ENCODE measurements at regions of chr5 and their contacts with region 1.

Region 1: DNA sequence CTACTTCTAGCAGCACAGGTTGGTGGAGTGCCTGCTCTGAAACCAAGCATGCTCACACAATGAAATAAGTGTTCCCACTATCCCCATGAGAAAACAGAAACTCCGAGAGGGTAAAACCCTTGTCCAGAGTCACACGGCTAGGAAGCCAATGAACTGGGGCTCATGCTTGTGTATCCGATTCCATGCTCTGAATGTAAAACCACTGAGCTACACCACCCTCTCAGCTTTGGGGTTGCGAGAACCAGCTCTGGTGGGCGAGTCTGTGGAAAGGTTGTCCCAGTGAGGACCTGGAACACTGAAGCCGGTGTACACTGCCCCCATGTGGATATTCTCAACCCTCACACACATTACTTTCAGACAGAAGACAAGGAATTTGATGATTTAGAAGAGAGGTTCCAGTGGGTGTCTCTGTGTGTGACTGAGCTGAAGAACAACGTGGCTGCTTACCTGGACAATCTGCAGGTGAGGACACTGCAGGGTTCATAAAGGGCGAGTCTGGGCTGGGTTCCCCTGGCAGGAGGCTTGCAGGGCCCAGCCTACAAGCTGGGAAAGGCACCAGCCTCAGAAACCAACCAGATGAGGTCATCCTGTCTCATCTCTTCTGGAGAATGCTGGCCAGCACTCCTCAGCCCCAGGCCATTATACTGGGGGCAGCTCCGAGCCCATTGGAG is 37.4 kb downstream of the ARHGEF37 start:
- DNase-seq: peak; percentile 75 to 77
- H3K4me3 ChIP-seq: no peak overlapping the region
- H3K27ac ChIP-seq: peak overlapping the region; percentile 54
- H3K4me1 ChIP-seq: peaks cover 33% of the 10 kb centered on the region
- H3K27me3 ChIP-seq: no peaks in the 10 kb centered on the region
- CTCF ChIP-seq: peak; percentile 87

Region 2: DNA sequence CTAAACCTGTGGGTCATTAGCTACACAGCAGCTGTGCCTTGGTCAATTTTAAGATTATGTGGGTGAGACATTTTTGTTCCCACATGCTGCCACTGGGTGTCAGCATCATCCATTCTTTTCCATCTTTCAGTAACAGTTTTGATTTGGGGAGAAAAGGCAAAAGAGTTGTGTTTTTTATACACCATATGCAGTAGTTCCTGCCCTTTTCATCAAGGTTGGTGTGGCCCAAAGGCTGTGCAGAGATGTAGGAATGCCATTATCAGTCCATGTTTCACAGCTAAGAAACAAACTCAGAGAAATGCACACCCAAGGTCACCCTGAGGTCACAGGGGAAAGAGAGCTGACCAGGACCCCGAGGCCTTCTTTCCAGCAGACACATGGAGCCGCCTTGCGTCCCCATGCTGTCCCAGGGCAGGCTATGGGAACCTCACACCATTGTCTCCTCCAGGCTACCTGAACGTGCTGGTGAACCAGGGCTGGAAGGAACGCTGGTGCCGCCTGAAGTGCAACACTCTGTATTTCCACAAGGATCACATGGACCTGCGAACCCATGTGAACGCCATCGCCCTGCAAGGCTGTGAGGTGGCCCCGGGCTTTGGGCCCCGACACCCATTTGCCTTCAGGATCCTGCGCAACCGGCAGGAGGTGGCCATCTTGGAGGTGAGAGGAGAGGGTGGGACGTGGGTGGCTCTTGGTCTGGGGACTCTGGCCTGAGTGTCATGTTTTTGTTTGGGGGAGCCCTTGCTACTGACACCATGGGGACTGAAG is 301.3 kb before region 1 on chr5:
- CTCF ChIA-PET with region 1: interaction called, 4 read pairs
- POLR2A ChIA-PET with region 1: no interaction called
- intact Hi-C with region 1: loop called (anchors 1 kb)
- DNase-seq: peak in 1 of 2 experiments; percentile 34
- H3K4me3 ChIP-seq: no peak overlapping the region
- H3K27ac ChIP-seq: no peak overlapping the region
- H3K4me1 ChIP-seq: peaks cover 3% of the 10 kb centered on the region; the same call in 1 of the 2 replicates
- H3K27me3 ChIP-seq: no peaks in the 10 kb centered on the region
- CTCF ChIP-seq: peak; percentile 79

Region 3: DNA sequence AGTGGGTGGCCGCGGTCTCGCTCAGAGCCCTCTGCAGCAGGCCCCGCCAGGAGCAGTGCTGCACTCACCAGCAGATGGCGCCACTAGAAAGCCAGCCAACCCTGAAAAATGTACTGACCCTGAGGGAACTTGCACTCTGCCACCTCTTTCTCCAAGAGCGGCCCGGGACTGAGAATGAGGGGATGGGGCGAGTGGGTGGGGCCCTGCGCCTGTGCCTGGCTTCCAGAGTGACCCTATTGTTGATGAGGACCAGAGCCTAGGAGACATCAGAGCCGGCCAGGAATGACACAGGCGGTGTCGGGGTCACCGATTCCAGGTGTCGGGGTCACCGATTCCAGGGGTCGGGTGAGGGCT is 236.8 kb before region 1 on chr5:
- CTCF ChIA-PET with region 1: interaction called, 3 read pairs
- POLR2A ChIA-PET with region 1: no interaction called
- intact Hi-C with region 1: loop called (anchors 1 kb)
- DNase-seq: peak in 1 of 2 experiments; percentile 81
- H3K4me3 ChIP-seq: no peak overlapping the region
- H3K27ac ChIP-seq: no peak overlapping the region
- H3K4me1 ChIP-seq: no peaks in the 10 kb centered on the region
- H3K27me3 ChIP-seq: no peaks in the 10 kb centered on the region
- CTCF ChIP-seq: peak; percentile 94

Region 4: DNA sequence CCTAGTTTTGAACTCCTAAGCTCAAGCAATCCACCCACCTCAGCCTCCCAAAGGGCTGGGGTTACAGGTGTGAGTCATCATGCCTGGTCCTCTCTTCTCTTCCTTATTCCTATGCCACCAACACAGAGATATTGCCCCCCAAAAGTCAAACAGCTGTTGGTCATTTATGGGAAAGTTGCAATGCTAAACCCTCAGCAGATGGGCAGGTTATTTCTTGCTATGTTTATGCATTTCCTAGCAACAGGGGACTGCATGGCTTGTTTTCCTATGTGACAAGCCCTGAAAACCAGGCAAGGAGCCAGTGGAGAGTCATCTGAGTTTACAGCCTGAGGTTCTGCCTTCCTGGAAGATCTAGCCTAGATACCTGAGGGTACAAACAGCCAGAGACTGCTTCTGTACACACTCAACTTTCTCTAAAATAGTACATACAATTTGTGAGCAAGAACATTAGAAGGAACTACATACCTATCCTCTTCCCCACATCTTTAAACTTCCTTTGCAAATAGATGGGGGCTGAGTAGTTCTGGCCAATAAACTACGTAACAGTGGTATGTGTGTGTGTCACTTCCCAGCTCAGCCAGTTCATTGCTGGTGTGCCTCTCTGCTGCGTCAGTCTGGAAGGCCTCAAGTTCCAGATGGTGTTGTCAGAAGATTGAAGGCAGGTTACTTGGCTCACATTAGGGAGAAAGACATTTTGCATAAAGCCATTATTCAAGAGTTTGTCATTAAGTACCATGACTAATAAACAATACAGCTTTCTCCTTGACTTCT is 132.9 kb before region 1 on chr5:
- CTCF ChIA-PET with region 1: interaction called, 3 read pairs
- POLR2A ChIA-PET with region 1: no interaction called
- intact Hi-C with region 1: loop called (anchors 5 kb)
- DNase-seq: peak; percentile 89 to 99
- H3K4me3 ChIP-seq: no peak overlapping the region
- H3K27ac ChIP-seq: peak overlapping the region; percentile 92
- H3K4me1 ChIP-seq: peaks cover 88% of the 10 kb centered on the region
- H3K27me3 ChIP-seq: no peaks in the 10 kb centered on the region
- CTCF ChIP-seq: no peak

Region 5: GRCh38 chr5:149551200-149552037 is 67.3 kb before region 1 on chr5 and contains the start of gene CSNK1A1:
- CTCF ChIA-PET with region 1: interaction called, 3 read pairs
- POLR2A ChIA-PET with region 1: interaction called, 7 read pairs
- intact Hi-C with region 1: loop called (anchors 1 kb)
- DNase-seq: peak; percentile 93 to 99
- H3K4me3 ChIP-seq: peak within 1 kb of the TSS; percentile 82
- H3K27ac ChIP-seq: peak within 1 kb of the TSS; percentile 86
- H3K4me1 ChIP-seq: peaks cover 57% of the 10 kb centered on the region
- H3K27me3 ChIP-seq: no peaks in the 10 kb centered on the region
- CTCF ChIP-seq: peak; percentile 88
- total RNA-seq, gene CSNK1A1: 300 and 334 TPM in 2 replicates

Region 6: DNA sequence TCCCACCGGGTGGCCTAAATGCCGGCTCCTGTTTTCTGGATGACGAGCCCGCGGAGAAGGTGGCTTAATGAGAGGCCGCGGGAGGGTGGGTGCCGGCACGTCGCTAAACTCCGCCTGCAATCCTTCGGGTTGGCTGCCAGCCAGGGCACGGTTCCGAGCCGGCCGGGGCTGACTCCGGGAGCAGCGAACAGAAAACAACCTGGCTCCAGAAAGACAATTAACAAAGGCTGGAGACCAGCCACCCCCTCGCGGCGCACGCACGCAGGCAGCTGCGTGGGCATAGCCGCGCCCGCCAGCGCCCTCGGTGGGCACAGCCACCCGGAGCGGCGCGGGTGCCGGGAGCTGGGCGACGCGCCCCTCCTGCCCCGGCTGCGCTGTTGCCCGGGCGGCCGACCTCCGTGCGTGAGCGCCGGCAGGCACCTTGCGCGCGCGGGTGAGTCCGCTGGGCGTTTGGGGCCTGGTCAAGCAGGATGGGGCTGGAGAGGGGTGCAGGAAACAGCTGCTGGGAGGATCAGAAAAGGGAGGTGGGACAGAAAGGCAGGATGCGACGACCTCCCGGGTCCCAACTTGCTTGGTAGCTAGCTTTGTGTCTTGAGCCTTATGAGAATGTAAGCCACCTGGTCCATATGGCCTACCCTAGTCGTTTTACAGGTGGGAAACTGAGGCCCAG is 37.4 kb before region 1 on chr5 and contains the start of gene ARHGEF37:
- CTCF ChIA-PET with region 1: no interaction called
- POLR2A ChIA-PET with region 1: no interaction called
- intact Hi-C with region 1: loop called (anchors 1 kb)
- DNase-seq: peak in 1 of 2 experiments; percentile 79
- H3K4me3 ChIP-seq: peak within 1 kb of the TSS; percentile 60
- H3K27ac ChIP-seq: 0 out of 2 replicates have a peak within 1 kb of the TSS, but pooled peaks have one; percentile 26
- H3K4me1 ChIP-seq: peaks cover 19% of the 10 kb centered on the region
- H3K27me3 ChIP-seq: no peaks in the 10 kb centered on the region
- CTCF ChIP-seq: no peak
- total RNA-seq, gene ARHGEF37: 5.5 and 8.6 TPM in 2 replicates

Region 7: DNA sequence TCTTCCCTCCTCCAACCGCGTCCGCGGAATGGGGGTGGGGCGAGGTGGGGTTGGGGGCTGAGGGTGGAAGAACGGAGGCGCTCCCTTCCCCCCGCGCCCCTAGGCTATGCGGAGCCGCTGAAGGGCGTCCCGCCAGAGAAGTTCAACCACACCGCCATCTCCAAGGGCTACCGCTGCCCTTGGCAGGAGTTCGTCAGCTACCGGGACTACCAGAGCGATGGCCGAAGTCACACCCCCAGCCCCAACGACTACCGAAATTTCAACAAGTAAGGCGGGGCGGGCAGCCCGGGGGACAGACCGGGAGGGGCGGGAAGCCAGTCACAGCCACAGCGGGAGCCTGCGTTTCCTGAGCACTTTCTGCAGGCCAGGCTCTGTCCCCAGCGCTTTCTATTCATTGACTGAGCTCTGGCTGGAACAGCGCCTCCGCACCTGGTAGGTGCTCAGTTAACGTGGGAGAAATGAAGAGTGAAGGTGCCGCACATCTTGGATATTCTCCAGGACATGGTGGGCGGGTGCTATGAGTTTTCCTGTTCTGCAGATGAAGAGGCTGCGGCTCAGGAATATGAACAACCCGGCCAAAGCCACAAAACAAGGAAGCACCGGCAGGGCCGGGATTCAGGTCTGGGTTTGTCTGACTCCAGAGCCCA is 1053.6 kb after region 1 on chr5:
- CTCF ChIA-PET with region 1: no interaction called
- POLR2A ChIA-PET with region 1: no interaction called
- intact Hi-C with region 1: no loop called
- DNase-seq: peak in 1 of 2 experiments; percentile 54
- H3K4me3 ChIP-seq: no peak overlapping the region; the same call in 1 of the 2 replicates
- H3K27ac ChIP-seq: no peak overlapping the region
- H3K4me1 ChIP-seq: no peaks in the 10 kb centered on the region
- H3K27me3 ChIP-seq: no peaks in the 10 kb centered on the region
- CTCF ChIP-seq: no peak

Measured in PC-9 (cell line).